Activated CD8-positive, alpha-beta T cell treated with anti-CD3 and anti-CD28 coated beads for 36 hours (primary cell): ENCODE measurements at regions of chr4 and their contacts with region 1.

Region 1: GRCh38 chr4:71184195-71184781 is 154.5 kb upstream of the SLC4A4 start:
- DNase-seq: peak; percentile 71
- ATAC-seq: peak; percentile 29
- H3K4me3 Mint-ChIP-seq: no peak overlapping the region
- H3K27ac Mint-ChIP-seq: no peak overlapping the region
- H3K4me1 Mint-ChIP-seq: peaks cover 23% of the 10 kb centered on the region
- H3K27me3 Mint-ChIP-seq: peaks cover 26% of the 10 kb centered on the region
- CTCF ChIP-seq: peak; percentile 69

Region 2: DNA sequence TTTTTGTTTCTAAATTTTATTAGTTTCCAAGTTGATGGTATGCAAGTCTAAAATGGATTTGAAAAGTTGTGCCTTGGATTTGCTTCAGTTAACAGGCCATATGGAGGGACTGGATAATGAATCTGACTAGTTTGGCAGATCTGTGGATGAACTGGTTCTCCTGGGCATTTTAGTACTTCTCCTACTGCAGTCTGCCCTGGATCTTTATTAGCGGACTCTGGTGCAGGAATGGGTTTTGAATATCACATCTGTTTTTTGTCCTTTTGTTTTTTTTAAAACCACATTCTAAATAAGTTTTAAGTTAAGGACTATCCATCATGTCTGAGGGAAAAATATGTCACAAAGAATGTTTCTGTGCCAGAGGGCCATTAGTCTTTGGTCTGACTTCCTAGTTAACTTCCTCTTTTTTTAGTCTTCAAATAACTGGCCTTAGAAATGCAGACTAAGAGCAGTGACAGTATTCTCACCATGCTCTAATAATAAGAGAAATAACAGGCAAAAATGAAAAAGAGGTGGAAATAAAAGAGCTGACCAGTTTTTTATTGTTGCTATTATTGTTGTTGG is 204.8 kb before region 1 on chr4:
- CTCF ChIA-PET with region 1: no interaction called
- POLR2A ChIA-PET with region 1: no interaction called
- intact Hi-C with region 1: loop called (anchors 10 kb)
- DNase-seq: no peak
- ATAC-seq: no peak
- H3K4me3 Mint-ChIP-seq: no peak overlapping the region
- H3K27ac Mint-ChIP-seq: no peak overlapping the region
- H3K4me1 Mint-ChIP-seq: peaks cover 3% of the 10 kb centered on the region
- H3K27me3 Mint-ChIP-seq: no peaks in the 10 kb centered on the region
- CTCF ChIP-seq: no peak

Region 3: DNA sequence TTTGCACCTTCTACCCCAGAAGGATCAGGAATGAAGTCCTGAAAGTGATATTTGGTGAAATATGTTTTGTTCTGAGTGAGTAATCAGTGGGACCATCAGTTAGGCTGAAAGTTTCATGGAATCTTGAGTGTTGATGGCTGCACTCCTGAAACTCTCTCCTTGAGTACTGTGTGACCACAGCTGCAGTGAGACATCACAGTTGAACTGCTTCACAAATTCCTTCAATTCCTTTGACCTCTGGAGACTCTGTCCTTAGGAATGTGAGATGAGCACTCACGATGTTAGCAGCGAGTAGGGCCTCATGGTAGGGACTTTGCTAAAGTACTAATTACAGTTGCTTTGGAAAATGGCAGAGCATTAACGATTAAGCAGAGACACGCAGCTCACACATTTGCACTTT is 11.6 kb after region 1 on chr4:
- CTCF ChIA-PET with region 1: interaction called, 16 read pairs
- POLR2A ChIA-PET with region 1: no interaction called
- intact Hi-C with region 1: no loop called
- DNase-seq: no peak
- ATAC-seq: no peak
- H3K4me3 Mint-ChIP-seq: no peak overlapping the region
- H3K27ac Mint-ChIP-seq: no peak overlapping the region
- H3K4me1 Mint-ChIP-seq: peaks cover 11% of the 10 kb centered on the region
- H3K27me3 Mint-ChIP-seq: peaks cover 4% of the 10 kb centered on the region
- CTCF ChIP-seq: no peak

Region 4: DNA sequence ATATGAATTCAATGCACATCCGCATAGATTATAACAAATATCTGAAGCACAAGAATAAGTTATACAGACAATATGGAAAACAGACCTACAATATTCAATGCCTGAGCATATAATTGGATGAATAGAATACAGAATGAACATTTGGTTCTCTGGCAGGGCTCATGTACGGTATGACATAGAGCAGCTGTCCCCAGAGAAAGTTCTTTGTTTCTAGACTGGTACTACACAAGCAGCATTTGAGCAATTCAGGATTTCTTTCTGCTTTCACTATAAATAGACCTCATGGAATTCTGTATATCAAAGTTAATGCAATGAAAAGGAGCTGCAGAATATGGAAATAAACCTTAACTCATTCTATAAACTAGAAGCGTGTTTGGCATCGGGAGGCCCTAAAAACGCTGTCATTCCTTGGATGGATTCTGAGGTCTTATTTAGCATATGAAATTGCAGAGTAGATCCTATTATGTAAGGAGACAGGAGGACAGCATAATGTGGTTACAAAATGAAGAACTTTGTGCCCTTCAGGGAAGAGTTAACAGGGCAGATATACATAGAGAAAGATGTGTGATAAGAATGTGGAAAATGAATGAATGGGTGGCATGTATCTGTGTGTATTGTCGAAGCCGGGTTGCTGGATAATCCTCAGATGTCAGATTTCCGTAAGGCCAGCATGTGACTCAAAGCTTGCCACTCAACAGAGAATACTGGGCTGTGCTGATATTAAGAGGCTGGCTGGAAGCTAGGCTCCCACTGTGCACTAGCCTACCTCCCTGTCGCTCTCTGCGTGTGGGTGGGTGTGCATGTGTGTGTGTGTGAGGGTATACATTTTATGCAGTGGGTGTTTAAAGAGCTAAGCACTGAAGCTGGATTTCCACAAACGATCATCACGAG is 51.3 kb after region 1 on chr4:
- CTCF ChIA-PET with region 1: interaction called, 11 read pairs
- POLR2A ChIA-PET with region 1: no interaction called
- intact Hi-C with region 1: no loop called
- DNase-seq: no peak
- ATAC-seq: no peak
- H3K4me3 Mint-ChIP-seq: no peak overlapping the region
- H3K27ac Mint-ChIP-seq: no peak overlapping the region
- H3K4me1 Mint-ChIP-seq: peaks cover 2% of the 10 kb centered on the region
- H3K27me3 Mint-ChIP-seq: peaks cover 1% of the 10 kb centered on the region
- CTCF ChIP-seq: no peak

Region 5: DNA sequence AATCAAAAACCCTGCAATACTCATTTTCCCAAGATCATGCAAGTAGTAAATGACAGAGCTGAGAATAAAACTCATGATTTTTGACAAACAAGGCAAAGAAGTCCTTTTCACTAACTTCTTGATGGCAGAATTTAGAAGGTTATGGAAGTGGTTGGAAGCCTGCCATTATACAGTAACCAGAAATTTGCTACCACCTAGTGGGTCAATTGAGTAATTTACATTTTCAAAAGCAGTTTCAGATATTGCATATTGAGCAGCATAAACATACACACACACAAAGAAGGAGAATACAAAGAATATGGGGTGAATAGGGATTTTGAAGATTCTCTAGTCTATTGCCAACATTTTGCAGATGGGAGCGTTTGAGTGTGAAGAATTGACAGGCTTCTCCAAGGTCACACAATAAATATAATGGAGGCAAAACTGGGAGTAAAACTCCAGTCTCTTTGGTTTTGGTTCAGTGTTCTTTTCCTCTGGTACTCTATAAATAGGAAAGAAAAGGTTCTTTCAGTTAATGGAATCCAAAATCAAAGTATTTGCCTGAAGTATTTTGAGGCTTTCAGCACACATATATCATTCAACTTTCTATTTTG is 529.4 kb after region 1 on chr4:
- CTCF ChIA-PET with region 1: interaction called, 11 read pairs
- POLR2A ChIA-PET with region 1: no interaction called
- intact Hi-C with region 1: loop called (anchors 5 kb)
- DNase-seq: no peak
- ATAC-seq: no peak
- H3K4me3 Mint-ChIP-seq: no peak overlapping the region
- H3K27ac Mint-ChIP-seq: no peak overlapping the region
- H3K4me1 Mint-ChIP-seq: no peaks in the 10 kb centered on the region
- H3K27me3 Mint-ChIP-seq: no peaks in the 10 kb centered on the region
- CTCF ChIP-seq: peak; percentile 59